Activated T-helper 1 cell treated with anti-CD3 and anti-CD28 coated beads, Interleukin-12 subunit alpha, Interleukin-12 subunit beta, Interleukin-2, Interleukin-4 antibody, amounts not matched to agents 30 ng/mL and 10 ng/mL and 1 ng/mL, durations not matched to agents 14 hours and 24 hours and 36 hours (primary cell): ENCODE measurements at regions of chr6 and their contacts with region 1.

Region 1: GRCh38 chr6:144343701-144344428 is 58.7 kb downstream of the UTRN start:
- DNase-seq: peak; percentile 36
- H3K4me3 Mint-ChIP-seq: peak overlapping the region; percentile 96
- H3K27ac Mint-ChIP-seq: peak overlapping the region; percentile 98
- H3K4me1 Mint-ChIP-seq: peaks cover 65% of the 10 kb centered on the region
- H3K27me3 Mint-ChIP-seq: no peaks in the 10 kb centered on the region

Region 2: DNA sequence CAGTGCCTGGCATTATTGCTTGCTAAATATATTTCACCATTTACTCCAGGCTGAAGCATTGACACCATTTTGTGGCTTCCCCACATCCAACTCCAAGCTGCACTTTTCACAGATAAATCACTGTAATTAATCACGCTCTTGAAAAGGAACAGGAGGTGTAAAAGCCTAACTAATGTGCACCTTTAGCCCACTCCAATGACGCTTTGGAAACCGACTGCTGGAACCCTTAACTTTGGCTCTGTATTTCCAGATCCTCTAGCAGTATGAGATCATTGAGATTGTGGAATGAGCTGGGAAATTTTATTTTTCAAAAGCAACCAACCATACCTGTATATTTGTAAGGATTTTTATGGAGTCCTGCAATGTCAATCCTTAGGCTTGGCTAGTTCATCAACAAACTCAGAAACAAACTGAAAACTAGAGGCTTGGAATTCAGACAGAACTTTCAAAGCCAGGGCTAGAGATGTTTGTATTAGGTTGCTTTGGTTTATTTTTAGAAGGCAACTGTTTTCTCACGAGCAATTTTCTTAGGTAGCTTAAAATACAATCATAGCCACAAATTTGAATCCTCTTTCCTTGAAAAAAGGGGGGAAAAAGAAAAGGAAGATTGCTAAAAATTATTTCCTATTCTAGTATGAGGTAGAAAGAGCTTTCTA is 111.6 kb before region 1 on chr6:
- intact Hi-C with region 1: no loop called
- DNase-seq: no peak
- H3K4me3 Mint-ChIP-seq: no peak overlapping the region
- H3K27ac Mint-ChIP-seq: no peak overlapping the region
- H3K4me1 Mint-ChIP-seq: no peaks in the 10 kb centered on the region
- H3K27me3 Mint-ChIP-seq: peaks cover 4% of the 10 kb centered on the region

Region 3: GRCh38 chr6:144305985-144306384 is 37.9 kb before region 1 on chr6:
- intact Hi-C with region 1: loop called (anchors 1 kb)
- DNase-seq: peak; percentile 41
- H3K4me3 Mint-ChIP-seq: peak overlapping the region; percentile 58
- H3K27ac Mint-ChIP-seq: peak overlapping the region; percentile 85
- H3K4me1 Mint-ChIP-seq: peaks cover 51% of the 10 kb centered on the region
- H3K27me3 Mint-ChIP-seq: peaks cover 6% of the 10 kb centered on the region

Region 4: DNA sequence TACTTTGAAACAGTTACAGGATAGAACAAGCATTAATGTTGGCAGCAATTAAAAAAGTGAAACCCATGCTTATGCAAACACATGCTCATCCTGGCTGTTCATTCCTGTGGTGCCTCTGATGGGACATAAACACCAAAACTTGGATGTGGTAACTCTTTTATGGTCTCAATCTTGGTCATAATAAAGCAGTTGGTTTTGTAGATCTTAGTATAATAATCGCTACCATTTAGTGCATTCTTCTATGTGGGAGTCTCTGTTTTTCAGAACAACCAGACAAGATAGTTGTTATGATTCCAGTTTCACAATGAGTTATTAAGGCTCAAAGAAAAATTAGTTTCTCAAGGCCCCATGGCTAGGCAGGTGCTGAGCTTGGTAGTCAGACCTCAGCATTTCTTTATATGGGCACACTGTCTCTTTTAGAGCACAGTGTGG is 125.3 kb after region 1 on chr6:
- intact Hi-C with region 1: loop called (anchors 1 kb)
- DNase-seq: no peak
- H3K4me3 Mint-ChIP-seq: peak overlapping the region; percentile 54
- H3K27ac Mint-ChIP-seq: peak overlapping the region; percentile 86
- H3K4me1 Mint-ChIP-seq: peaks cover 27% of the 10 kb centered on the region
- H3K27me3 Mint-ChIP-seq: no peaks in the 10 kb centered on the region